ENCODE measurements at regions of chr6 and their contacts with region 1.

Region 1: GRCh38 chr6:70857387-70858077 is 99.3 kb downstream of the B3GAT2 start:
- DNase-seq: no peak
- ATAC-seq: no peak
- H3K4me3 ChIP-seq: no peak overlapping the region
- H3K4me3 Mint-ChIP-seq: no peak overlapping the region
- H3K27ac ChIP-seq: no peak overlapping the region
- H3K27ac Mint-ChIP-seq: no peak overlapping the region
- H3K4me1 ChIP-seq: no peaks in the 10 kb centered on the region
- H3K4me1 Mint-ChIP-seq: no peaks in the 10 kb centered on the region
- H3K27me3 ChIP-seq: no peaks in the 10 kb centered on the region
- H3K27me3 Mint-ChIP-seq: no peaks in the 10 kb centered on the region

Region 2: DNA sequence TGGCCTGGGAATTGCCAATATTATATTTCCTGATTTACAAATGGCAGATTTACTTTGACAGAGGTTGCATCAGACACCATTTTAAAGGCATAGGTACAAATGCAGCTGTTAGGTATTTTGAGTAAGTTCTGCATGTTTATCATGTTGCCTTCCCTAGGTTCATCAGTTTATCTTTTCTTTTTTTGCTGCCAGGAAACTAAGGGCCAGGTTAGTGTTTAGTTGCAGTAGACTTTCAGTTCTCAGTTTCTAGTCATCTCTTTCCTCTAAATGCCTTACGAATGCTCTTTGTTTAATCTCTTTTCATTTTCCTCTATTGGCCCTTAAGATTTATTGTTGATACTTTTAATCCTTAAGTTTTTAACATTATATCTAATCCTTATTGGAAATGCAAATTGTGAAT is 59.9 kb before region 1 on chr6:
- CTCF ChIA-PET with region 1: no interaction called
- POLR2A ChIA-PET with region 1: interaction called in 1 of 2 experiments, 12 read pairs
- DNase-seq: no peak
- ATAC-seq: no peak
- H3K4me3 ChIP-seq: no peak overlapping the region
- H3K4me3 Mint-ChIP-seq: no peak overlapping the region
- H3K27ac ChIP-seq: no peak overlapping the region
- H3K27ac Mint-ChIP-seq: no peak overlapping the region
- H3K4me1 ChIP-seq: no peaks in the 10 kb centered on the region
- H3K4me1 Mint-ChIP-seq: peaks cover 36 to 51% (median 42%) of the 10 kb centered on the region in 3 donors
- H3K27me3 ChIP-seq: no peaks in the 10 kb centered on the region
- H3K27me3 Mint-ChIP-seq: no peaks in the 10 kb centered on the region

Measured in T-cell (primary cell).